Activated T-helper 1 cell treated with anti-CD3 and anti-CD28 coated beads, Interleukin-12 subunit alpha, Interleukin-12 subunit beta, Interleukin-2, Interleukin-4 antibody, amounts not matched to agents 30 ng/mL and 10 ng/mL and 1 ng/mL, durations not matched to agents 14 hours and 24 hours and 36 hours (primary cell): ENCODE measurements at regions of chr16 and their contacts with region 1.

Region 1: DNA sequence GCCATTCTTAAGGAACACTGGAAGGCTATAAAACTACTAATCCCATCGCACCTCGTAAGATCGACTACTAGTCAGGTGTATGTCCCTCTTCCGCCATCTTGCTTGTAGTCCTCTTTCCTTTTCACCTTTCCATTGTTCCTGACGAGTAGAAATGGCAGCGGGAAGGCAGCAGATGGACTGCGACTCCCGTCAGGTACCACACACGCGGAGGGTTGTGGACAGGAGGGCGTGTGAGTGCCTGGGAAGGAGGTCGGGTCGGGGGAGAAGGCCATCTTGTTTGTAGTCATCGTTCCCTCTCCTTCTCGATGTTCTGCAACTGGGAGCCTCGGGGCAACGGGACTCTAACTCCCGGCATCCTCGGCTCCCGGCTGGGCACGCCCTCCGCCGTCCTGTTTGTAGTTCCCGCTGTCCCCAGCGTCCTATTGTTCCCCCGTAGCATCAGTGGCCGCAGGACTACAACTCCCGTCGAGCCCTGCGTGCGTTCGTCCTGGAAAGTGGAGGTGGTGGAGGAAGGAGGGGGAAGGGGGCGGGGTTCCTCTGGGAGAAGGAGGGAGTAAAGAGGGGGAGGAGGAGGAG is 324 bp upstream of the FBXL19 start:
- DNase-seq: peak; percentile 95
- H3K4me3 Mint-ChIP-seq: peak overlapping the region; percentile 95
- H3K27ac Mint-ChIP-seq: peak overlapping the region; percentile 100
- H3K4me1 Mint-ChIP-seq: peaks cover 18% of the 10 kb centered on the region
- H3K27me3 Mint-ChIP-seq: no peaks in the 10 kb centered on the region

Region 2: GRCh38 chr16:30650369-30651123 is 272.5 kb before region 1 on chr16 and contains the start of gene PRR14:
- intact Hi-C with region 1: loop called (anchors 2 kb)
- DNase-seq: peak; percentile 98
- H3K4me3 Mint-ChIP-seq: peak within 1 kb of the TSS; percentile 97
- H3K27ac Mint-ChIP-seq: peak within 1 kb of the TSS; percentile 98
- H3K4me1 Mint-ChIP-seq: peaks cover 25% of the 10 kb centered on the region
- H3K27me3 Mint-ChIP-seq: peaks cover 2% of the 10 kb centered on the region
- total RNA-seq, gene PRR14: 91.9 and 97.4 TPM in 2 replicates

Region 3: GRCh38 chr16:30761928-30762810 is 160.9 kb before region 1 on chr16 and contains the starts of genes CFAP119 and RNF40:
- intact Hi-C with region 1: loop called (anchors 1 kb)
- DNase-seq: peak; percentile 95
- H3K4me3 Mint-ChIP-seq: peak within 1 kb of the TSS; percentile 93
- H3K27ac Mint-ChIP-seq: peak within 1 kb of the TSS; percentile 82
- H3K4me1 Mint-ChIP-seq: peaks cover 28% of the 10 kb centered on the region
- H3K27me3 Mint-ChIP-seq: no peaks in the 10 kb centered on the region
- total RNA-seq, gene CFAP119: 4.4 and 5.6 TPM in 2 replicates
- total RNA-seq, gene RNF40: 98.2 and 98.5 TPM in 2 replicates

Region 4: DNA sequence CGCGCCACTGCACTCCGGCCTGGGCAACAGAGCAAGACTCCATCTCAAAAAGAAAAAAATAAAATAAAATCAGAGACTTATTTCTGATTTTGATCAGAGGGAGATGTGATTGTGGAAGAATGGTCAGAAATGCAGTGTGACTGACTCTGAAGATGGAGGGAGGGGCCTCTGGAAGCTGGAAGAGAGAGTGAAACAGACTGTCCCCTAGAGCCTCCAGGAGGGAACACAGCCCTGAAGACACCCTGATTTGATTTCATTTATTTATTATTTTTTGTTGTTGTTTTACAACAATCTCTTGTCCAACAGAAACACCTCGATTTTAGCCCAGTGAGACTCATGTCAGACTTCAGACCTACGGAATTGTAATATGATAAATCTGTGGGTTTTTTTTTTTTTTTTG is 55.3 kb before region 1 on chr16:
- intact Hi-C with region 1: no loop called
- DNase-seq: no peak
- H3K4me3 Mint-ChIP-seq: no peak overlapping the region
- H3K27ac Mint-ChIP-seq: no peak overlapping the region
- H3K4me1 Mint-ChIP-seq: peaks cover under 1% of the 10 kb centered on the region
- H3K27me3 Mint-ChIP-seq: no peaks in the 10 kb centered on the region

Region 5: GRCh38 chr16:30893744-30894539 is 29.1 kb before region 1 on chr16 and contains the start of gene BCL7C:
- intact Hi-C with region 1: loop called (anchors 1 kb)
- DNase-seq: peak; percentile 86
- H3K4me3 Mint-ChIP-seq: peak within 1 kb of the TSS; percentile 92
- H3K27ac Mint-ChIP-seq: peak within 1 kb of the TSS; percentile 78
- H3K4me1 Mint-ChIP-seq: peaks cover 39% of the 10 kb centered on the region
- H3K27me3 Mint-ChIP-seq: no peaks in the 10 kb centered on the region
- total RNA-seq, gene BCL7C: 23.1 and 25.3 TPM in 2 replicates

Region 6: GRCh38 chr16:30934827-30935557 is 11.9 kb after region 1 on chr16:
- intact Hi-C with region 1: no loop called
- DNase-seq: no peak
- H3K4me3 Mint-ChIP-seq: no peak overlapping the region
- H3K27ac Mint-ChIP-seq: peak overlapping the region; percentile 41
- H3K4me1 Mint-ChIP-seq: peaks cover 23% of the 10 kb centered on the region
- H3K27me3 Mint-ChIP-seq: no peaks in the 10 kb centered on the region

Region 7: DNA sequence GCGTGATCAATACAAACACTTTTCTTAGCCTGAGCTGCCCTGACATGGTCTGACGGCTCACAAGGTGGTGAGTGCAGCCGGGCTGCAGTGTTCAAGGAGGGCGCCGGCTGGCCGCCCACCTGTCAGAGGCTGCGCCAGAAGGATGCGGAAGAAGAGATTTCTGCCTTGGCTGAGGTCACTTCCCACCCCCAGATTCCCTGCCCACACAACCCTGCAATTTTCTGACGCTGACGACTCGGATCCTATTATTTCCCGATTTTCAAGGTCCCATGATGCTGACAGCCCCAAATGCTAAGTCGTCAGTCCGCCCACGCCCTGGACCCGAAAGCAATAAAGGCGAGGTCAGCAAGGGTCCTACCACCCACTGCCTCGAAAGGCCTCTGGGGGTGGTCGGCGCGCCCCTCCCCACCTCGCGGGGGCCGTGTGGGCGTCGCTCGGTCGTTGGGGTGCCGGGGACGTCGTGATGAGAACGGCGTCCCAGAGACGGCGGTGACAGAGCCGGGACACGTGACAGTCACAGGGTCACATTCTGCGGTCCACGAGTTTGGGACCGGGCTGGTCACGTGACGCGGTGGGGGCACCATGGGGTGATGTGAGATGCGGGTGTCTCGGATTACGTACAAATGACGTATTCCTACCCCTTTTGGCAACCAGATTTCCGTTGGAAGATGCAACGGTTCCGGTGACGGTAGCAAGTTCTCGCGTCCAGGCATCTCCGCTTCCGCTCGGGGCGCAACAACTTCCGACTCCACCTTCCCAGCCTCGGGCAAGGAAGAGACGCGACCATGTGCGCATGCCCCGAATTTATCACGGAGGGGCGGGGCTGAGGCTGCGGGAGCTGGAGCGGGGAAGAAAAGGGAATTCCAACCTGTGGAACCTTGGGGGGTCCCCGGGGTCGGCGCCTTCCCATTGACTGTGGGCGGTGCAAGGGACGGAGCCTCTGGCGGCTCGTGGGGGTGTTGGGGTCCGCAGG is 110.0 kb after region 1 on chr16 and contains the start of gene STX4:
- intact Hi-C with region 1: loop called (anchors 1 kb)
- DNase-seq: peak; percentile 97
- H3K4me3 Mint-ChIP-seq: peak within 1 kb of the TSS; percentile 95
- H3K27ac Mint-ChIP-seq: peak within 1 kb of the TSS; percentile 92
- H3K4me1 Mint-ChIP-seq: peaks cover 24% of the 10 kb centered on the region
- H3K27me3 Mint-ChIP-seq: no peaks in the 10 kb centered on the region
- total RNA-seq, gene STX4: 56.4 and 58.7 TPM in 2 replicates

Region 8: DNA sequence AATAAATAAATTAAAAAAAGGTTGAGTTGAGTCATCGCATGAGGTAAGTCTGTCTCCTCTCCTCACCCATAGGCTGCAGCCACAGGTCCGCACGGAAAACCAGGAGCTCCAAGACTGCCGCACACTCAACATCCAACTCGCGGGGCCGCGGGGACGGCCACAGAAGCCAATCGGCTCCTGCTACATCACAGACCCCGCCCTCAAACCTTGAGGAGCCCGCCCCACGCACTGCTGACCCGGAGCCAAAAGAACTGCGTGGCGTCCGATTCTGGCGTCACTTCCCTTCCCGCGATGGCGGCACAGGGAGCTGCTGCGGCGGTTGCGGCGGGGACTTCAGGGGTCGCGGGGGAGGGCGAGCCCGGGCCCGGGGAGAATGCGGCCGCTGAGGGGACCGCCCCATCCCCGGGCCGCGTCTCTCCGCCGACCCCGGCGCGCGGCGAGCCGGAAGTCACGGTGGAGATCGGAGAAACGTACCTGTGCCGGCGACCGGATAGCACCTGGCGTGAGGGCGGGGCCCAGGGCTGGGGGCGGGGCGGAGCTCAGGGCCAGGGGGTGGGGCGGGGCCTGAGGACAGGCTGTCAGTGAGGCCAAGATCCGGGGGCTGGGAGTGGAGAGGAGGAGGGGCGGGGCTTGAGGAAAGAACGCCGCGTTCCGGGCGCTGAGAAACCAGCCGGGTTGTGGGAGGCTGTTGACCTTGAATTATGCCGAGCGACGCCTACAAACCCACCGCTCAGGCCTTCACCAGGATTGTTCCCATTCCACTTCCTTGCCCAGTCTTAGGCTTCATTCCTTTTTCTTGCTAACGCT is 194.5 kb after region 1 on chr16 and contains the start of gene KAT8:
- intact Hi-C with region 1: loop called (anchors 1 kb)
- DNase-seq: peak; percentile 95
- H3K4me3 Mint-ChIP-seq: peak within 1 kb of the TSS; percentile 88
- H3K27ac Mint-ChIP-seq: peak within 1 kb of the TSS; percentile 92
- H3K4me1 Mint-ChIP-seq: peaks cover 19% of the 10 kb centered on the region
- H3K27me3 Mint-ChIP-seq: no peaks in the 10 kb centered on the region
- total RNA-seq, gene KAT8: 55.4 and 58.2 TPM in 2 replicates